Activated T-helper 1 cell treated with anti-CD3 and anti-CD28 coated beads, Interleukin-12 subunit alpha, Interleukin-12 subunit beta, Interleukin-2, Interleukin-4 antibody, amounts not matched to agents 30 ng/mL and 10 ng/mL and 1 ng/mL, durations not matched to agents 14 hours and 24 hours and 36 hours (primary cell): ENCODE measurements at regions of chr1 and their contacts with region 1.

Region 1: DNA sequence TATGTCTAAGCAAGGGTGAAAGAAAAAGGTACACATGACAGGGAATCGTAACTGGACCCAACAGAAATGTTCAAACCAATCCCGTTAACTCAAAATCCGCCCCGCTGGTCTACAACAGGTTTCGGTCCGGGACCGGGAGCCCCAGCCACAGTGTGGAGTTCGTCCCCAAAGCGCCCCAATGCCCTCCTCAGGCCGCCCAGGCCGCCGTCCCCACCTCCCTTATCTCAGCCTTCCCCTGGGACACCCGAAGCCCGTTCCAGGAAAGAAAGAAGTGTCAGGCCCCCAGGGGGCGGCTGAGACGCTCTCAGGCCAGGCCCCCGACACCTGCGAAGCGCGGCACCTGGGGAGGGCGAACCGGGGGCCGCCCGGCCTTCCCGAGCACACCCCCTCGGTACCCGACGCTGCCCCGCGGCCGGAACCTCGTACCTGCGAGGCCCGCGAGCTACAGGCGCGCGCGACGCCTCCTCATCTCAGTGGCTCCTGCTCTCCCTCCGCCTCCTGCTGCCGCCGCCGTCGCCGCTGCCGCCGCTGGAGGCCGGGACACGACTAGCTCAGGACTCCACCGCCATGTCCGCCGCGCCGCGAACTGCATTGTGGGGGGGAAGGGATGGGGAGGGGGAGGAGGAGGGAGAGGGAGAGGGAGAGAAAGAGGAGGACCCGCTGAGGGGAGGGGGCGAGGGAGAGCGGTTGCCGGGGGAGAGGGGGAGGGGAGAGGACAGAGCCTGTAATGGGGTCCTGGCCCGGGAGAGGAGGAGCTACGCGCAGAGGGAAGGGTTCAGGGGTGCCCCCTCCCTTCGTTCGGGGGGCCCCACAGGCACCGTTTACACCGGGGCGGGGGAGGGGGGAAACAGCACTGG is at the start of gene TUT4:
- DNase-seq: peak; percentile 69
- H3K4me3 Mint-ChIP-seq: peak within 1 kb of the TSS; percentile 49
- H3K27ac Mint-ChIP-seq: peak within 1 kb of the TSS; percentile 86
- H3K4me1 Mint-ChIP-seq: peaks cover 36% of the 10 kb centered on the region
- H3K27me3 Mint-ChIP-seq: peaks cover 3% of the 10 kb centered on the region
- total RNA-seq, gene TUT4: 62.5 and 67.8 TPM in 2 replicates

Region 2: DNA sequence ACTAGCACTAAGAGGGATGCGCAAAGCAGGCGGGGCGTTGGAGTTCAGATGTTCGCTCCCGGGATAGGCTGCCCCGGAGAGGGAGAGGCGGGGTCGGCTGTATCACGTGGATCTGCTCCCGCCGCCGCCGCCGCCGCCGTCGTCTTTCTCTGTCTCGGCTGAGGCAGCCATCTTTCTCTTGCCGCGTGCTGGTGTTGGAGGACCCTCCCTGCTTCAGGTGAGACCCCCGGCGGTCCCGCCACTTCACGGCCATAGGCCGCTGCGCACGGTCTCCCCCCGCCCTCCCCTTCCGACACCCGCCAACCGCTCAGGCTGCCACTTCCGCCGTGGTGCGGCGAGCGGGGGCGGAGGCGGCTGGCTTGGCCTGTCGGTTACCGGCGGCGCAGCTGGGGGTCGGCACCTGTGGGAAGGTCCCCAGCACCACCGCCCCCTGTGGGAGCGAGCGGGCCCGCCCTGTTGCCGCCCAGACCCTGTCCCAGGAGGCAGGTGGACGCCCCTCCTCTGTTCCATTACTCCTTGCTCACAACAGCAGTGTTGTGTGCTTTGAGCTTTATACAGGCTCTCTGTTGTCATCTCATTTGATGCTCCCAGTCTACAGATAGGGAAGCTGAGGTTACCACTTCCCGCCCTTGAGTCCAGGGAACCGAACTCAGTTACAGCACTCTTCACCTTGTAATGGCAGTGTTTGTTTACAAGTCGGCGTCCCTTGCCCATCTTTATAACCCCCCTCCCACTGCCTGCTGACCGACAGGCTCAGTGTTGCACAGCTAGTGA is 496.4 kb before region 1 on chr1 and contains the start of gene BTF3L4:
- intact Hi-C with region 1: loop called (anchors 2 kb)
- DNase-seq: peak; percentile 92
- H3K4me3 Mint-ChIP-seq: peak within 1 kb of the TSS; percentile 100
- H3K27ac Mint-ChIP-seq: peak within 1 kb of the TSS; percentile 100
- H3K4me1 Mint-ChIP-seq: peaks cover 72% of the 10 kb centered on the region
- H3K27me3 Mint-ChIP-seq: no peaks in the 10 kb centered on the region
- total RNA-seq, gene BTF3L4: 44.9 and 47.5 TPM in 2 replicates

Region 3: GRCh38 chr1:52424231-52424636 is 128.5 kb before region 1 on chr1:
- intact Hi-C with region 1: loop called (anchors 5 kb)
- DNase-seq: peak; percentile 21
- H3K4me3 Mint-ChIP-seq: peak overlapping the region; percentile 19
- H3K27ac Mint-ChIP-seq: peak overlapping the region; percentile 82
- H3K4me1 Mint-ChIP-seq: peaks cover 49% of the 10 kb centered on the region
- H3K27me3 Mint-ChIP-seq: no peaks in the 10 kb centered on the region

Region 4: GRCh38 chr1:52601991-52602855 is 49.5 kb after region 1 on chr1 and contains the start of gene GPX7:
- intact Hi-C with region 1: loop called (anchors 1 kb)
- DNase-seq: peak; percentile 54
- H3K4me3 Mint-ChIP-seq: peak within 1 kb of the TSS; percentile 87
- H3K27ac Mint-ChIP-seq: peak within 1 kb of the TSS; percentile 86
- H3K4me1 Mint-ChIP-seq: peaks cover 49% of the 10 kb centered on the region
- H3K27me3 Mint-ChIP-seq: no peaks in the 10 kb centered on the region
- total RNA-seq, gene GPX7: 32.7 and 32.8 TPM in 2 replicates

Region 5: DNA sequence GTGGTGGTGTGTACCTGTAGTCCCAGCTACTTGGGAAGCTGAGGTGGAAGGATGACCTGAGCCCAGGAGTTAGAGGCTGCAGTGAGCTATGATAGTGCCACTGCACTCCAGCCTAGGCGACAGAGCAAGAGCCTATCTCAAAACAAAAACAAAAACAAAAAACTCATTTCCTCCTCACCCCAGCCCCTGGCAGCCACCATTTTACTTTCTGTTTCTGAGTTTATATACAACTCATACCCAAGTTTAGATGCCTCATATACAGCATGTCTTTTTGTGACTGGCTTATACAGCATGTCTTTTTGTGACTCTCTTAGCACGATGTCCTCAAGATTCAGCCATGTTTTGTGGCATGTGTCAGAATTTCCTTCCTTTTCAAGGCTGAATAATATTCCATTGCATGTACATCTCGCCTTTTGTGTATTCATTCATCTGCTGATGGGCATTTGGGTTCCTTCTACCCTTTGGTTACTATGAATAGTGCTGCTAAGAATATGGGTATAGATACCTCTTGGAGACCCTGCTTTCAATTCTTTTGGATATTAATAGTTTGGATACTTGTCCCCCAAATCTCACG is 130.7 kb after region 1 on chr1:
- intact Hi-C with region 1: loop called (anchors 1 kb)
- DNase-seq: no peak
- H3K4me3 Mint-ChIP-seq: no peak overlapping the region
- H3K27ac Mint-ChIP-seq: no peak overlapping the region
- H3K4me1 Mint-ChIP-seq: peaks cover 26% of the 10 kb centered on the region
- H3K27me3 Mint-ChIP-seq: no peaks in the 10 kb centered on the region

Region 6: DNA sequence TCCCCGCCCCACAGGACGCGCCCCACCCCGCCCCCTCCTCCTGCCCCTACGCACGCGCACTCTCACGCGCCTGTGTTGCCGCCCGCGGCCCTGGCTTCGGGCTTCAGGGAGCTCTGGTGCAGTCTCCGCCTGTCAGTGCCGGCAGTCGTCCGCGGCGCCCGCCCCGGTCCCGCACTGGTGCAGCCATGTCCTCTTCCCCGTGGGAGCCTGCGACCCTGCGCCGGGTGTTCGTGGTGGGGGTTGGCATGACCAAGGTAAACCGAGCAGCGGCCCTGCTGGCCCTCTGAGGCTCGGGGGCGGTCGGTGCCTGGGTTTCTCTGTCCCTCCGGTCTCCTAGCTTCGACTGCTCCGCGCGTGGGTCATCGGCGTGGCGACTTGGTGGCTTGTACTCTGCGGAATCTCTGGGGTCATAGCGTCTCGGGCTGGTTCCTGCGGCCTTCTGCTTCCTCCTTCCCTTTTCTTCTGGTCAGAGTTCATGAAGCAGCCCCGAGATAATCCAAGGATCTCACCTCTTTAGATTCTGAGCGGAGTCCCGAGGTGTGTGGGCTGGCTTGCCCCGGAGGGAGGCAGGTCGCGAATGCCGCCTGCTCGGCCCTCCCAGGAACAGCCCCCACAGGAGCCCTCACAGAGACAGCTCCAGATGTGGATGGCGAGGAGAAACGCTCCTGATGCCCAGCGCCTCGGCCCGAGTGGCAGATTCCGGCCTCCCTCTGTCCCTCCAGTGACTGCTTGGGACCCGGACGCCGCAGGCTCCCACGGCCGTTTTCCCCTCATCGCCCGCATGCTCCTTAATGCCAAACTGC is 374.7 kb after region 1 on chr1 and contains the start of gene SCP2:
- intact Hi-C with region 1: loop called (anchors 10 kb)
- DNase-seq: peak; percentile 74
- H3K4me3 Mint-ChIP-seq: peak within 1 kb of the TSS; percentile 90
- H3K27ac Mint-ChIP-seq: peak within 1 kb of the TSS; percentile 83
- H3K4me1 Mint-ChIP-seq: peaks cover 15% of the 10 kb centered on the region
- H3K27me3 Mint-ChIP-seq: peaks cover 8% of the 10 kb centered on the region
- total RNA-seq, gene SCP2: 54.7 and 58.3 TPM in 2 replicates

Region 7: DNA sequence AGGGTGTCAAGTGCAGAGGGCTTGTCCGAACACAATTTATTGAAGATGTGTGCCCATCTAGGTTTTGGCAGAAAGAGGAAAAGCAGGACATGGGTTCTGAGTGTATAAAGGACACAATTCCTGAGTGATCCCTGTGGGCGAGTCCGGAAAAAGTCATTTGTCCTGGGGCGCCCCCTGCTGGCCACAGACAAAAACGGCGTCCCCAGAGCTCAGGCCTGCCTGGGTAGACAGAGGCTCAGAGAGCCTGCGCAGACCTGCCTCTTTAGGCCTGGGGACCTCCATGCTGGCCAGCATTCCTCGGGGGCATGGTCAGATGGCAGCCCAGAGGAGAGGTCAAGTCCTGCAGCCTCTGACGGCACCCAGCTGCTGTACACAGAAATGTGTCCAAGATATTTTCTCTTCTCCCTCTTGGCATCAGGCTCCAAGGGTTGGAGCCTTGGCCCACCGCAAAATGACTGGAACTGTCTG is 840.6 kb after region 1 on chr1:
- intact Hi-C with region 1: no loop called
- DNase-seq: peak; percentile 61
- H3K4me3 Mint-ChIP-seq: no peak overlapping the region
- H3K27ac Mint-ChIP-seq: no peak overlapping the region
- H3K4me1 Mint-ChIP-seq: peaks cover 21% of the 10 kb centered on the region
- H3K27me3 Mint-ChIP-seq: peaks cover 2% of the 10 kb centered on the region